H1 (cell line): ENCODE measurements at regions of chr16 and their contacts with region 1.

Region 1: DNA sequence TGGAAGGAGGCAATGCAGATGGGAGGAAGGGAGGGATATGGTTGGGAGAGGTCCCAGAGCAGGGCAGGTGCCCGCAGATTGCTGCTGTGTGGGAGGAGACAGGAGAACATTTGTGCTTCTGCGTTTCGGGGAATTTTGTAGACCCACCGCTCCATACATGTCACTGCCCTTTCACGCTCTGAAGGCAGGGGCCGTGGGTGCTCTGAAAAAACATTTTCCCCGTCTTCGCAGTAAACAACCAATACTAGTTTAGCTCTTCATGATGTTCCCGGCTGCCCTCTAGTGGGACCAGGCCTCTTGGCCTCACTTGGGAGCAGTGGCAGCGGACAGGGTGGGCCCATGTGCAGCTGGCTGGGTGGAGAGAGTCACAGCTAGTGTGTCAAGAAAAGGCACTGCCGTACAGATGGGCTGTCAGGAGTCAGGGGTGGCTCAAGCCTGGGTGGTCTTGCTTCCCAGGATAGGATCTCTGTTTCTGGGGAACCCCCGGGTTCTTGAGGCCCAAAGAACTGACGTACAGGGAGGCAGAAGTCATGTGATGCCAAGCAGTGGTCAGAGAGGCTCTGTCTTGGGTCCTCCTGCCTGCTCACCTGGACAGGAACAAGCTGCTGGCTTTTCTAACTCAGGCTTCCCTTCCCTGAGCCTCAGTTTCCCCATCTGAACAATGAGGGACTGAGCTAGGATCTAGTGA is 46.5 kb upstream of the CPNE2 start:
- DNase-seq: peak in 1 of 2 experiments; percentile 84
- H3K4me3 ChIP-seq: no peak overlapping the region
- H3K27ac ChIP-seq: no peak overlapping the region
- H3K4me1 ChIP-seq: no peaks in the 10 kb centered on the region
- H3K27me3 ChIP-seq: no peaks in the 10 kb centered on the region
- CTCF ChIP-seq: peak; percentile 66 to 87 (median 79)
- EP300 ChIP-seq: no peak
- POLR2A ChIP-seq: no peak
- RAD21 ChIP-seq: peak; percentile 61 to 73

Region 2: GRCh38 chr16:57013229-57013628 is 32.6 kb before region 1 on chr16:
- CTCF ChIA-PET with region 1: interaction called, 14 read pairs
- POLR2A ChIA-PET with region 1: no interaction called
- DNase-seq: no peak
- H3K4me3 ChIP-seq: no peak overlapping the region
- H3K27ac ChIP-seq: no peak overlapping the region
- H3K4me1 ChIP-seq: peaks cover 0 to 2% (median 0%) of the 10 kb centered on the region in 4 experiments; a peak in 1 of 7 replicates
- H3K27me3 ChIP-seq: no peaks in the 10 kb centered on the region
- CTCF ChIP-seq: no peak
- EP300 ChIP-seq: no peak
- POLR2A ChIP-seq: no peak
- RAD21 ChIP-seq: no peak

Region 3: GRCh38 chr16:57061084-57061905 is 15.5 kb after region 1 on chr16:
- CTCF ChIA-PET with region 1: interaction called, 13 read pairs
- POLR2A ChIA-PET with region 1: interaction called, 3 read pairs
- DNase-seq: no peak
- H3K4me3 ChIP-seq: no peak overlapping the region
- H3K27ac ChIP-seq: no peak overlapping the region
- H3K4me1 ChIP-seq: peaks cover 0 to 4% (median 2%) of the 10 kb centered on the region in 4 experiments; a peak in 2 of 7 replicates
- H3K27me3 ChIP-seq: no peaks in the 10 kb centered on the region
- CTCF ChIP-seq: no peak
- EP300 ChIP-seq: no peak
- POLR2A ChIP-seq: no peak
- RAD21 ChIP-seq: no peak